Posterior vena cava (tissue), 2 donors: ENCODE measurements at regions of chr17 and their contacts with region 1.

Region 1: DNA sequence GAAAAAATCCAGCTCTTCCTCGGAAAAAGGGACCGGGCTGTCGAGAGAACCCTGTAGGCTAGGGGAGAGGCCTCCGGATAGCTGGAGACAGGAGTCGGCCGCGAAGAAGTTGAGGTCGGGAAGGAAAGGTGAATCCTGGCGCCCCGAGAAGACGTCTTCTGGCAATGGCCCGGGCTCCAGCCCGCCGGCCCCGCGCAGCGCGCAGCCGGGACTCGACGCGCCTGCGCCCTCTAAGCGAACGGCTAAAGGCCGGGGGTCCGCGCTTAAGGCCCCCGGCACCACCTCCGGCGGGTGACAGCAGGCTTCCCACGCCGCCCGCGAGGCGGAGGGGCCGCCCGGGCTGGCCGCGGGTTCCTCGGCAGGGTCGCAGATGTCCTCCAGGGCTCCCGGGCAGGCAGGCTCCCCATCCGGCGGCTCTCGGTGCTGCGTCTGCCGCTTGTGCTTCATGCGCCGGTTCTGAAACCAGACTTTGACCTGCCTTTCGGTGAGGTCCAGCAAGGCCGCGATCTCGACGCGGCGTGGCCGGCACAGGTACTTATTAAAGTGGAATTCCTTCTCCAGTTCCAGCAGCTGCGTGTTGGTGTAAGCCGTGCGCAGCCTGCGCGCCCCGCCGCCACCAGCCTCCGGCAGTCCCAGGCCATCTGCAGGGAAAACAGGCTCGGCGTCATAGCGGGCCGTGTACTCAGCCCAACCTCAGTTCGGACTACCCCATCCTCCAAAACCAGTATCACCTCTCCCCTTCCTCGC is 1.6 kb downstream of the HOXB2 start:
- DNase-seq: no peak

Region 2: GRCh38 chr17:48429638-48430586 is 113.4 kb before region 1 on chr17 and contains the start of gene SKAP1:
- intact Hi-C with region 1: no loop called
- DNase-seq: peak; percentile 67
- total RNA-seq, gene SKAP1: 1.1 to 1.5 TPM

Region 3: GRCh38 chr17:48492401-48493298 is 50.6 kb before region 1 on chr17:
- intact Hi-C with region 1: loop called in 1 of 2 experiments (anchors 5 kb)
- DNase-seq: peak; percentile 90

Region 4: DNA sequence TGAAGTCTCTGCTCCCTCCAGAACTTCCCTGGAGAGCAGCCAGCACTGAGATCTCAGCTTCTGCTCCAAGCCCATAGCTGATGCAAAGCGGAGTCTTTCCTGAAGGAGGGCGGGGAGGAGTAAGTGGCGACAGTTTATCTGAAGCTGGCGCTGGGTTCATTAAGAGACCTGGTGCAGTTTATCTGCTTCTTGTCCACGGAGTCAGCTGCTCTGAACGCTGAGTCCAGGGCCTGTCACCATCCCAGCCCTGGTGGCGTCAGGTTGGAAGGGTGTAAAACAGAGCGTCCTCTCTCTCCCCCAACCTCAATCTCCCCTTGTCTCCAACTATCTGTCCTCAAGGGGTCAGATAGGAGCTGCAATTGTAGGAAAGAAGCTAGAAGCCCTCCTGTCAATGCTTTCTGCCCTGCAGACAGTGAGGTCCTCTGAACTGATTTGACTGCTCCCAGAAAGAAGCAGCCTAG is 42.3 kb before region 1 on chr17:
- intact Hi-C with region 1: loop called in 1 of 2 experiments (anchors 5 kb)
- DNase-seq: no peak

Region 5: DNA sequence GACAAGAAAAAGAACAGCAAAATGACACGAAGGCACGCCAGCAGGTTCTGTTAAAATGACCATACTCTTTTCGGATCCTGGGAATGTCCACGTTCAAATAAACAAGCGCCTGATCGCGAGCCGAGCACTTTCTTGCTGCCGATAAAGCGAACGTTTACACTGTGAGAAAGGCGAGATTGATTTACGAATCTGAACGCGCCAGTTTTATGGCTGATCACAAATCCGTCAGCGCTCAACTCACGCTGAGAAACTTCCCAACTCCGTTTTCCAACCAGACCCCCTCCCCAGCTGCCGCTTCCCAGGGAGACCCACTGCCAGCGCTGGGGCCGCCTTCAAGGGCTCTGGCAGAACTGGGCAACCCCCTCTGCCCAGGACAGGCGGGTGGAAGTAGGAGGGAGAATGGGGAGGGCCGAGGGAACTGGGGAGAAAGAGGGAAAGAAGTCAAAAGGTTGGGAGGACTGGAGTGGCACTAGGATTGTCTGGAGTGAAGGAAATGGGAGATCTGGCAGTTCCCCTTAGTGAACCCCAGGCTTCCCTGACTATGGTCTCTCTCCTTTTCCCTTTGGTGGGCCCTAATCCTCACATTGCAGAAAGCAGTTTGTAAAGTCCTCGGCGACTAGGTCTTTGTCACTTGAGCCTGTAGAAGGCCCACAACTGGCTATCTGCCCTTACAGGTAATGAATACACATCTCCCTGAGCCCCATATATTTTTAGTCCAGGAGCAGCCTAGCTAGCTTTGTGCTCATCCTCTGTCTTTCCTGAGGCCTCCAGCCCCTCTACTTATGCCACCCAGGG is 27.9 kb after region 1 on chr17:
- intact Hi-C with region 1: loop called in 1 of 2 experiments (anchors 2 kb)
- DNase-seq: no peak

Region 6: DNA sequence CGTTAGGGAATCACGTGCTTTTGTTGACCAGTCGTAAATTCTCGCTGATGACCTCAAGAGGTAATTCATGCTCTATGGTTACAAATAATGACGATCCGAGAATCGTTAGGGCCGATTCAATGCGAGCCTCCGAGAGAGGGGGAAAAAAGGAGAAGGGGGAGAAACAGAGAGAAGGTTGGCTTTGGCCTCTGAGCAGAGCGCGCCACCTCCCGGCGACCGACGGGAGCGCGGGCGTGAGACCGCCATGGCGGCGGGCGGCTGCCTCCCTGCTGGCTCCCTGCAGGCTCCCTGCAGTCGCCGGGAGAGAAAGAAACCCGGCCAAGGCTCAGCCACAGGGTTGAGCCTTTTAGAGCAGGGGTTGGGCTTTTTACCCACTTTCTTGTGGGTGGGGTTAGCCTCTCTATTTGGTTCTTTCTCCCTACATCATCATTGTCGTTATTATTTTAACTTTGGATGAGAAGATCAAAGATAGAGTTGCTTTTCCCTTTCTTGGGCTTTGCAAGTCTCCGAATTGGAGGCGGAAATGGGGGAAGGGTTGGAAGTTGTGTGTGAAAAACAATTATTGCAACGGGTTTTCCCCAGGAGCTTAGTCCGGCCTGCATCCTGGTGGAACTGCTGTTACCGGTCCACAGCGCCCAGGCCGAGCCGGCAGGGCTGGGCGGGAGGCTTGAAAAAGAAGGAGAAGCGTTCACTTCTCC is 50.7 kb after region 1 on chr17:
- intact Hi-C with region 1: no loop called
- DNase-seq: peak; percentile 94